Activated CD4-positive, alpha-beta T cell treated with anti-CD3 and anti-CD28 coated beads for 36 hours (primary cell): ENCODE measurements at regions of chr4 and their contacts with region 1.

Region 1: DNA sequence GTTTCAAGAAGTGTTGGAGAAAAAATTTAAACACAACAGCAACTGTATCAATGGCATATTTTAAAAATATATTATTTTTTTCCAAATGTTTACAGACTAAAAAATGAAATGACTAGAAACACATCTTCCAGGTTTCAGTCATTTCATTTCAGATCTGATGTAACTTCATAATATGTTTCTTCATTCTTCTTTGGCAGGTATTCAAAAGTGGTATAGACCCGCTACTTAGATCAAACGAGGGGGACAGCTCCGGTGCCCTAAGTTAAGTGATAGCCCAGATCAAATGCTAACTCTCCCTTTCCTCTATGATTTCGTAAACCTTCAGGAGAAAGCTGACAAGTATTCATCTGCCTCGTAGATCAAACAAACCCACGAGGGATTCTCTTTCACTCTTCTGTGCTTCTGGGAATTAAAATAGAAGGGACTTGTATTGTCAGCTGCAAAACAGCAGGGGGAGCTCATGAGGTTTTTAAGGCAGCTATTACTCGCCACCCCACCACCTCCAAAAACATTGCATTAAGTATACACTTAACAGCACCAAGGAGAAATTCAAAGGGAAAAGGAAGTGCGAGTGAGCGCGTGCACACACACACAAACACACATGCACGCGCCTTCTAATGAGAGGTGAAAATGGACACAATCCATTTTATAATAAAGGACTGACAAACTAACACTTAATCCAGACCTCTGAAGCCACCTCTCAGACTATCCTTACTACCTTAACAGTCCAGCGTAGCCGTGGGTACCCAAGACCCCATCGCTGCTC is 21.4 kb downstream of the HELT start:
- DNase-seq: peak; percentile 70
- ATAC-seq: peak; percentile 93
- H3K4me3 Mint-ChIP-seq: peak overlapping the region; percentile 58
- H3K27ac Mint-ChIP-seq: peak overlapping the region; percentile 78
- H3K4me1 Mint-ChIP-seq: peaks cover 4% of the 10 kb centered on the region
- H3K27me3 Mint-ChIP-seq: peaks cover 5% of the 10 kb centered on the region

Region 2: GRCh38 chr4:184695178-184695896 is 344.4 kb before region 1 on chr4:
- CTCF ChIA-PET with region 1: no interaction called
- POLR2A ChIA-PET with region 1: no interaction called
- intact Hi-C with region 1: no loop called
- DNase-seq: no peak
- ATAC-seq: no peak
- H3K4me3 Mint-ChIP-seq: no peak overlapping the region
- H3K27ac Mint-ChIP-seq: no peak overlapping the region
- H3K4me1 Mint-ChIP-seq: peaks cover 3% of the 10 kb centered on the region
- H3K27me3 Mint-ChIP-seq: no peaks in the 10 kb centered on the region

Region 3: GRCh38 chr4:185020293-185020808 is 19.3 kb before region 1 on chr4:
- CTCF ChIA-PET with region 1: interaction called, 10 read pairs
- POLR2A ChIA-PET with region 1: no interaction called
- intact Hi-C with region 1: no loop called
- DNase-seq: peak; percentile 31
- ATAC-seq: no peak
- H3K4me3 Mint-ChIP-seq: no peak overlapping the region
- H3K27ac Mint-ChIP-seq: no peak overlapping the region
- H3K4me1 Mint-ChIP-seq: peaks cover 9% of the 10 kb centered on the region
- H3K27me3 Mint-ChIP-seq: peaks cover 68% of the 10 kb centered on the region

Region 4: GRCh38 chr4:185096032-185096653 is 56.5 kb after region 1 on chr4:
- CTCF ChIA-PET with region 1: interaction called, 77 read pairs
- POLR2A ChIA-PET with region 1: no interaction called
- intact Hi-C with region 1: loop called (anchors 1 kb)
- DNase-seq: peak; percentile 41
- ATAC-seq: no peak
- H3K4me3 Mint-ChIP-seq: no peak overlapping the region
- H3K27ac Mint-ChIP-seq: no peak overlapping the region
- H3K4me1 Mint-ChIP-seq: no peaks in the 10 kb centered on the region
- H3K27me3 Mint-ChIP-seq: peaks cover 14% of the 10 kb centered on the region

Region 5: DNA sequence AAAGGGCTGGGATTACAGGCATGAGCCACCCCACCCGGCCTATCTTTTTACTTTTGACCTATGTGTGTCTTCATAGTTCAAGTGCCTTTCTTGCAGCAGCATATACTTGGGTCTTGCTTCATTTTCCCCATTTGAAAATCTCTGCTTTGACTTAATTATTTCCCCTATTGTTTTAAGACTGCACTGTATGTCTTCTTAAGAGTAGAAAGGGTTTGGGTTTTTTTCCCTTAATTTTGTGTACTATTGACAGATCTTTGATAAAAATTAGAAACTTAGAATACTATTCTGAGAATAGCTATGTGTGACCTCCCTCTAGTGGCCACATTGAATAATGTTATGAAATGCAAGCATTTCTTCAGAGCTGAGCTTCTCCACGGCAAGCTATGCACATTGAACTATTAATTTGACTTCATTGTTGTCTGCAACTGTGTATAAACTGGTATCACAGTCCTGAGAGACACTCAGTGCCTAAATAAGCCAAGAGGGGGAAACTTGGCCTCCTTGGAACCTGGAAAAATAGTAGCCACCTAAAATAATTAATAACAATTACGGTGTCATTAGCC is 94.7 kb after region 1 on chr4:
- CTCF ChIA-PET with region 1: interaction called, 62 read pairs
- POLR2A ChIA-PET with region 1: no interaction called
- intact Hi-C with region 1: loop called (anchors 1 kb)
- DNase-seq: no peak
- ATAC-seq: peak; percentile 70
- H3K4me3 Mint-ChIP-seq: no peak overlapping the region
- H3K27ac Mint-ChIP-seq: no peak overlapping the region
- H3K4me1 Mint-ChIP-seq: no peaks in the 10 kb centered on the region
- H3K27me3 Mint-ChIP-seq: peaks cover 28% of the 10 kb centered on the region

Region 6: DNA sequence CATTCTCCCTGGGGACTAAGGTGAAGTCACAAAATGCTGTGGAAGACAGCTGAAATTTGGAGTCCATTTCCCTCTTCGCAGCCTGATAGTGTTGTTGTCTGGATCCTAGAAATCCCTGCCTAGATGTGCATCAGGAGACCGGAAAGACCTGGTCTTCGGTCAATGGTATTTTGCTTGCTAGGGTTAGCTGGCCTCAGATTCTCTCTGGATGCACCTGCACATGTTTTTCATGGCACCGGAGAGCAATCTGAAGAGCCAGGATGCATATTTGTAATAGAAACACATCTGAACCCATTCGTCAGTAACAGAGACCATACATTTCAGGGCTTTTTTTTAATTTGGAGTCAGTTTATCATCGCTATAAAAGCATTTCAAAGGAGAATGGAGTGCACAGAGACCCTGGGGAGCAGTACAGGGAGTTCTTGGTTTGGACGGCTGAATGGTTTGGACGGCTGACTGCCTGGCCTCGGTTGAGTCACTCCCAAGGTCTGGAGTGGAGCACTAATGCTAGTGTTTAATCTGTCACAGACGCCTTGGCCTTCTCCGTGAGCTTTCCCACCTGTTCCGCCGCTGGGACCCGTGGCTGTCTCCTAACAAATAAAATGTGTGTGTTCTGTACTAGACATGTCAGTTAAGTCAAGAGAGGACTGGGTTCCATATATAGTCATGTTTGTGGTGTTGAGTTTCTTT is 503.1 kb after region 1 on chr4:
- CTCF ChIA-PET with region 1: no interaction called
- POLR2A ChIA-PET with region 1: no interaction called
- intact Hi-C with region 1: no loop called
- DNase-seq: no peak
- ATAC-seq: no peak
- H3K4me3 Mint-ChIP-seq: no peak overlapping the region
- H3K27ac Mint-ChIP-seq: no peak overlapping the region
- H3K4me1 Mint-ChIP-seq: no peaks in the 10 kb centered on the region
- H3K27me3 Mint-ChIP-seq: peaks cover 10% of the 10 kb centered on the region

Region 7: DNA sequence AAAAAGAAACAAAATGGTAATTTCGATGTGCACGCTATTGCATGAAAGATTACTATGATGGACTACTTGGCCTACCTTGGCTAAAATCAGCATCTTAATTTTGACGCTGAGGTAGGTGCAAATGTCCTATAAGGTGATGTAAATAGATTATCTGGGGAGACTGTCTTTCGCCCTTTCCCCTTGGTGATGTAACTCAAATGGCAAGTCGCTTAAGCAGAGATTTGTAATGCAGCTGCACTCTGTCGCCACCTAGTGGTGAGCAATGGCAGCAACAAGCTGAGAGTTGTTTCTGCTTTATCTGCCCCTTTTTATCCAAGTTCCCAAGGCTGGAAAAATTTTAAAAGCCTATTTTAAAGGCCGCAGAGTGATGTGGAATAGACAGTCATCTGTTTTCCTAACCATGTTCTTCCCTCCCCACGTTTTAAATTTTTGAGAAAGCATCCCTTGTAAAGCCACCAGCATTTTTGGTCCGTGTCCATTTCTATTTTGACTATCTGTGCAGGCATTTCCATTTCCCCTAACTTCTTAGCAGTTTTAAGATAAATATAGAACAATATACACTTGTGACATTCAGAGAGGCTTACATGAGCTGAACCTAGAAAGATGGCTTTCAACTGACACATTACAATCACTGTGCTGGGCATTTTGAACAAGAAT is 558.0 kb after region 1 on chr4:
- CTCF ChIA-PET with region 1: interaction called, 5 read pairs
- POLR2A ChIA-PET with region 1: no interaction called
- intact Hi-C with region 1: loop called in 1 of 2 experiments (anchors 2 kb)
- DNase-seq: peak; percentile 86
- ATAC-seq: peak; percentile 57
- H3K4me3 Mint-ChIP-seq: no peak overlapping the region
- H3K27ac Mint-ChIP-seq: no peak overlapping the region
- H3K4me1 Mint-ChIP-seq: peaks cover 3% of the 10 kb centered on the region
- H3K27me3 Mint-ChIP-seq: peaks cover 18% of the 10 kb centered on the region

Region 8: DNA sequence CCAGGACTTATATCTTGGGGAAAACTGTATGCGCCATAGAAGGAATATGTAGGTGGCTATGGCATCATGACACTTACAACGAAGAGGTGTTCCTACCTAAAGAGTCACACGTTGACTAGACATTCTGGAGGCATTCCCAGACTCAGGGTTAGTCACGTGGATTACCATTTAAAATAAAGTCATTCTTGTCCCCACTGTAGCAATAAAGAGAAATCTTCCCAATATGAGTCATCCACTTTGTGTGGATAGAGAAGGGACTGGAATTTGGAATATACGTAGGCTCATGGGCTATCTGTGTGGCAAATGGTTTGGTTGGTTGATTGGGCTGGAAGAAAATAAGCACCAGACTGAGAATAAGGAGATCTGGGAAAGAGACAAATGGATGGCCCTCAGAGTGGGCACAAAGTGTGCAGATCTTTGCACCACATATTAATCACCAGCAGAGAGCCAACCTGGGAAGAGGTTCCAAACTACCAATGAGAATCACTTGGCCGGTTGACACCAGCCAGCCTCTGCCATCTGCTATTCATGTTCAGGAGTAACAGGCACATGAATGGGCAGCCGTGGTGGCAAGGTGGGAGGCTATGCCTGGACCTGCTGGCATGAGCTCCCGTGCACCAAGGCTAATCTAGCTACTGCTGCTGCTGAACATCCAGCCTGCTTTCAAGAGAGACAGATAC is 1474.7 kb after region 1 on chr4:
- CTCF ChIA-PET with region 1: no interaction called
- POLR2A ChIA-PET with region 1: no interaction called
- intact Hi-C with region 1: no loop called
- DNase-seq: no peak
- ATAC-seq: no peak
- H3K4me3 Mint-ChIP-seq: no peak overlapping the region
- H3K27ac Mint-ChIP-seq: no peak overlapping the region
- H3K4me1 Mint-ChIP-seq: no peaks in the 10 kb centered on the region
- H3K27me3 Mint-ChIP-seq: no peaks in the 10 kb centered on the region